Activated CD4-positive, alpha-beta T cell treated with anti-CD3 and anti-CD28 coated beads for 36 hours (primary cell): ENCODE measurements at regions of chr7 and their contacts with region 1.

Region 1: GRCh38 chr7:100428967-100429636 is 529 bp upstream of the MEPCE start:
- DNase-seq: peak; percentile 100
- ATAC-seq: peak; percentile 70
- H3K4me3 Mint-ChIP-seq: peak overlapping the region; percentile 88
- H3K27ac Mint-ChIP-seq: peak overlapping the region; percentile 100
- H3K4me1 Mint-ChIP-seq: peaks cover 43% of the 10 kb centered on the region
- H3K27me3 Mint-ChIP-seq: no peaks in the 10 kb centered on the region

Region 2: DNA sequence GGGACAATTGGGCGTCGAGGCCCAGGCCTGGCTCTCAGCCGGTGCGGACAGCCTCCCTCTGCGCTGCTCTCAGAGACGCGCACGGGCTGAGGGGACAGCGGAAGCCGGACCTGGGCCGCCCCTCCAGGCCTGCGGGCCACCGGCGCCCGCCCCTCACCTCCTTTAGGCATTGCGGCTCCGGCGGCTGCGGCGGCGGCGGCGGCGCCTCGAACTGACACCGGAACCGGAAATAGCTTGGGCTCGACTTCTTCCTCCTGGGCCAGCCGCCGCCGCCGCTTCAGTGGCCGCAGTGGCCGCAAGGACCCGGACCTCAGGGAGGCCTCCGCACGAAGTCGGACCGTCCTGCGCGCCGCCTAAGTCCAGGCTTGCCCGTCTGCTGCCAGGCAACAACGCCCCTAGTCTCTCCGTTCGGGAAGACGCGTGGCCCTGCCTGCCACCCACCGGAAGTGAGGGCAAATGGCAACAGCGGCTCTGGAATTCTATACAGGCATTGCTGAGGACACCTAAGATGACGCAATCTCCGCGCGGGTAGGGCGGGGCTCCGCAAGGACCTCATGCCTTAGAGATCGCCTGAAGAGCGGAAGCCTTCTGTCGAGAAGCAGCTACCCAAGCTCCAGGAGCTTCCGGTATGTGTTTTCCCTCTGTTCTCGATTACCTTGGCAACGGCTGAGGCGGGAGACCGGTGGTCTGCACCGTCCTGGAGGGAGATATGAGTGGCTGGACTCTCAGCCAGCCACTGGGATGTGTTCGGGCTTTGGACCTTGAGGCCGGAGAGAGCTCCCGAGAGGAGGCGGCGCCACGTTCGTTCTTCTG is 1020.5 kb before region 1 on chr7 and contains the starts of genes BUD31 and PDAP1:
- CTCF ChIA-PET with region 1: no interaction called
- POLR2A ChIA-PET with region 1: no interaction called
- intact Hi-C with region 1: loop called in 1 of 2 experiments (anchors 1 kb)
- DNase-seq: peak; percentile 94
- ATAC-seq: peak; percentile 89
- H3K4me3 Mint-ChIP-seq: peak within 1 kb of the TSS; percentile 90
- H3K27ac Mint-ChIP-seq: peak within 1 kb of the TSS; percentile 96
- H3K4me1 Mint-ChIP-seq: peaks cover 40% of the 10 kb centered on the region
- H3K27me3 Mint-ChIP-seq: no peaks in the 10 kb centered on the region
- total RNA-seq, gene BUD31: 140 to 190 TPM
- total RNA-seq, gene PDAP1: 171 TPM

Region 3: DNA sequence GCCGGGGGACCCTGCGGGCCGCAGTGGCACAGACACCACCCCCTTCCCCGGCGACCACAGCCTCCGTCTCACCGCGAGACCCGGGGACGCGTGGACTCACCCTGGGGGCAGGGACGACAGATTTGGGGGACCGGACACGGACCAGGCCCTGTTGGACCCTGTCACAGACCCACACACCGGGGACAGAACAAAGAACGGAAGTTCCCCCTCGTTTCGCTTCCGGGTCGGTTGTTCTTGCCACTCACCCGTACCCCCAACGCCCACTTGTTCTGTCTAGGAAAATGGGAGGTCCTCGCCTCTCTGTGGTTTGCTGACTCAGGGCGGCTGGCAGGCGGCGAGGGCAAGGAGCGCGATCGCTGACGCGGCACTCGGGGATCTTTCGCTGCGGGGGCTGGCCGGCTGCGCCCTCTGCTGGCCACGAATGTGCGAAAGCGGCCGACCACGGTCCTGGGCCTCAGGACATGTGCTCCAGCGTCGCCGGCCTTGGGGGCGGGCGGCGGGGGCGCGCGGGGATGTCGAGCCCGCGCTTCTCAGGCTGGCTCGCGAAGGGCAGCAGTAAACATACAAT is 347.5 kb before region 1 on chr7 and contains the start of gene ZNF3:
- CTCF ChIA-PET with region 1: no interaction called
- POLR2A ChIA-PET with region 1: no interaction called
- intact Hi-C with region 1: loop called in 1 of 2 experiments (anchors 1 kb)
- DNase-seq: peak; percentile 99
- ATAC-seq: peak; percentile 83
- H3K4me3 Mint-ChIP-seq: peak within 1 kb of the TSS; percentile 87
- H3K27ac Mint-ChIP-seq: peak within 1 kb of the TSS; percentile 87
- H3K4me1 Mint-ChIP-seq: peaks cover 25% of the 10 kb centered on the region
- H3K27me3 Mint-ChIP-seq: no peaks in the 10 kb centered on the region
- total RNA-seq, gene ZNF3: 18.8 to 19.0 TPM

Region 4: GRCh38 chr7:100126931-100127865 is 301.9 kb before region 1 on chr7 and contains the start of gene MBLAC1:
- CTCF ChIA-PET with region 1: no interaction called
- POLR2A ChIA-PET with region 1: interaction called, 7 read pairs
- intact Hi-C with region 1: loop called in 1 of 2 experiments (anchors 2 kb)
- DNase-seq: peak; percentile 95
- ATAC-seq: peak; percentile 74
- H3K4me3 Mint-ChIP-seq: peak within 1 kb of the TSS; percentile 93
- H3K27ac Mint-ChIP-seq: peak within 1 kb of the TSS; percentile 99
- H3K4me1 Mint-ChIP-seq: peaks cover 28% of the 10 kb centered on the region
- H3K27me3 Mint-ChIP-seq: no peaks in the 10 kb centered on the region
- total RNA-seq, gene MBLAC1: 1.6 to 2.2 TPM

Region 5: GRCh38 chr7:100257017-100257416 is 172.1 kb before region 1 on chr7:
- CTCF ChIA-PET with region 1: no interaction called
- POLR2A ChIA-PET with region 1: no interaction called
- intact Hi-C with region 1: no loop called
- DNase-seq: no peak
- ATAC-seq: no peak
- H3K4me3 Mint-ChIP-seq: no peak overlapping the region
- H3K27ac Mint-ChIP-seq: no peak overlapping the region
- H3K4me1 Mint-ChIP-seq: no peaks in the 10 kb centered on the region
- H3K27me3 Mint-ChIP-seq: no peaks in the 10 kb centered on the region

Region 6: GRCh38 chr7:100342765-100343164 is 86.3 kb before region 1 on chr7:
- CTCF ChIA-PET with region 1: no interaction called
- POLR2A ChIA-PET with region 1: interaction called, 3 read pairs
- intact Hi-C with region 1: loop called in 1 of 2 experiments (anchors 2 kb)
- DNase-seq: no peak
- ATAC-seq: no peak
- H3K4me3 Mint-ChIP-seq: no peak overlapping the region
- H3K27ac Mint-ChIP-seq: peak overlapping the region; percentile 59
- H3K4me1 Mint-ChIP-seq: peaks cover 44% of the 10 kb centered on the region
- H3K27me3 Mint-ChIP-seq: no peaks in the 10 kb centered on the region

Region 7: GRCh38 chr7:100538654-100539435 is 109.7 kb after region 1 on chr7 and contains the start of gene AGFG2:
- CTCF ChIA-PET with region 1: no interaction called
- POLR2A ChIA-PET with region 1: interaction called, 5 read pairs
- intact Hi-C with region 1: loop called in 1 of 2 experiments (anchors 1 kb)
- DNase-seq: peak; percentile 100
- ATAC-seq: peak; percentile 92
- H3K4me3 Mint-ChIP-seq: peak within 1 kb of the TSS; percentile 98
- H3K27ac Mint-ChIP-seq: peak within 1 kb of the TSS; percentile 95
- H3K4me1 Mint-ChIP-seq: peaks cover 42% of the 10 kb centered on the region
- H3K27me3 Mint-ChIP-seq: no peaks in the 10 kb centered on the region
- total RNA-seq, gene AGFG2: 49.3 to 49.4 TPM

Region 8: GRCh38 chr7:100673300-100673941 is 244.3 kb after region 1 on chr7 and contains the start of gene GNB2:
- CTCF ChIA-PET with region 1: no interaction called
- POLR2A ChIA-PET with region 1: interaction called, 4 read pairs
- intact Hi-C with region 1: loop called (anchors 1 to 10 kb)
- DNase-seq: peak; percentile 99
- ATAC-seq: peak; percentile 78
- H3K4me3 Mint-ChIP-seq: peak within 1 kb of the TSS; percentile 94
- H3K27ac Mint-ChIP-seq: peak within 1 kb of the TSS; percentile 93
- H3K4me1 Mint-ChIP-seq: peaks cover 12% of the 10 kb centered on the region
- H3K27me3 Mint-ChIP-seq: no peaks in the 10 kb centered on the region
- total RNA-seq, gene GNB2: 172 to 200 TPM